Activated naive CD4-positive, alpha-beta T cell treated with anti-CD3 and anti-CD28 coated beads, Interleukin-2, amount 10 ng/mL, durations not matched to agents 7 days and 5 days (primary cell): ENCODE measurements at regions of chr11 and their contacts with region 1.

Region 1: GRCh38 chr11:48055292-48056132 is 75.2 kb downstream of the PTPRJ start:
- DNase-seq: peak; percentile 89
- H3K4me3 Mint-ChIP-seq: peak overlapping the region; percentile 41
- H3K27ac Mint-ChIP-seq: peak overlapping the region; percentile 86
- H3K4me1 Mint-ChIP-seq: peaks cover 94% of the 10 kb centered on the region
- H3K27me3 Mint-ChIP-seq: no peaks in the 10 kb centered on the region

Region 2: DNA sequence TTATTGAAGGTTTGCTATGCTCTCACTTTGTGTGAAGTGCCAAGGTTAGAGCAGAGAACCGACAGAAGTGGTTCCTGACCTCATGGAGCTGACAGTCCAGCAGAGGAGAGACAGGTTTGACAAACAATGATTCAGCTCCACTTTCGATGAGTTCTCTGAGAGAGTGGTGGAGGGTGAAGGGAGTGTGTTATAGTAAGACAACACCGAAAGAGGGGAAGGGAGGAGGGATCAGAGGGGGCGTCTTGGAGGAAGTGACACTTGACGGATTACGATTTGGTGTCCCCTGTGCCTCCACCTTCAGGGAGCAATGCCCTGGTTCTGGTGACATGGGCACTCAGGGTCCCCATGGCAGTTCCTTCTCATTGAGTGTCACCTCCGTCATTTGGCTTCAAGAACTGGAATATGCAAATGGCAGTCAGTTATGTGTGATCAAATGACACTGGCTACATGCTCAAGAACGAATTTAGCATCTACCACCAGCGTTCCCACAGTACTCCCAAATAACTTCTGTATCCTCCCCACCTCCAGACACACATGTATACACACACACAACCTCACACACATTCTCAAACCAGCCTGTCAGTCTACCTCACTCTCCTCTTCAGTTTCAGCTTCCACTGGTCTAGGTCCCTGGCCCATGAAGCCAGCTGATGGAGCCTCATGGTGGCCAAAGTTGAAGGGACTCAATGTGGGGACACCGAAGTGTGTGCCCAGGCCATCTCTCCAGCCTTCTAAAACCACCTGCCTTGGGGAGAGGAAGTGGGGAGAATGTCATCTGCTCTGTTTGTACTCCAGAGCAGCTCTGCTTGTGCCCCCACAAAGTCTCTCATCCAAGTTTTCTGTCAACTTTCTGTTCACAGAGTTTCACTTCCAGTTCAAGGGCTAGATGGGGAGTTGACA is 176.0 kb before region 1 on chr11:
- CTCF ChIA-PET with region 1: no interaction called
- DNase-seq: no peak
- H3K4me3 Mint-ChIP-seq: no peak overlapping the region
- H3K27ac Mint-ChIP-seq: peak overlapping the region; percentile 19
- H3K4me1 Mint-ChIP-seq: peaks cover 33% of the 10 kb centered on the region
- H3K27me3 Mint-ChIP-seq: peaks cover 7% of the 10 kb centered on the region

Region 3: GRCh38 chr11:48001438-48002021 is 54.0 kb before region 1 on chr11:
- CTCF ChIA-PET with region 1: interaction called, 23 read pairs
- DNase-seq: peak; percentile 93
- H3K4me3 Mint-ChIP-seq: peak overlapping the region; percentile 53
- H3K27ac Mint-ChIP-seq: peak overlapping the region; percentile 96
- H3K4me1 Mint-ChIP-seq: peaks cover 92% of the 10 kb centered on the region
- H3K27me3 Mint-ChIP-seq: no peaks in the 10 kb centered on the region

Region 4: GRCh38 chr11:48028914-48029680 is 26.4 kb before region 1 on chr11:
- CTCF ChIA-PET with region 1: no interaction called
- DNase-seq: peak; percentile 60
- H3K4me3 Mint-ChIP-seq: peak overlapping the region; percentile 8
- H3K27ac Mint-ChIP-seq: peak overlapping the region; percentile 90
- H3K4me1 Mint-ChIP-seq: peaks cover 71% of the 10 kb centered on the region
- H3K27me3 Mint-ChIP-seq: no peaks in the 10 kb centered on the region

Region 5: GRCh38 chr11:48043111-48043990 is 12.2 kb before region 1 on chr11:
- CTCF ChIA-PET with region 1: interaction called, 13 read pairs
- DNase-seq: peak; percentile 59
- H3K4me3 Mint-ChIP-seq: peak overlapping the region; percentile 35
- H3K27ac Mint-ChIP-seq: peak overlapping the region; percentile 84
- H3K4me1 Mint-ChIP-seq: peaks cover 67% of the 10 kb centered on the region
- H3K27me3 Mint-ChIP-seq: no peaks in the 10 kb centered on the region

Region 6: DNA sequence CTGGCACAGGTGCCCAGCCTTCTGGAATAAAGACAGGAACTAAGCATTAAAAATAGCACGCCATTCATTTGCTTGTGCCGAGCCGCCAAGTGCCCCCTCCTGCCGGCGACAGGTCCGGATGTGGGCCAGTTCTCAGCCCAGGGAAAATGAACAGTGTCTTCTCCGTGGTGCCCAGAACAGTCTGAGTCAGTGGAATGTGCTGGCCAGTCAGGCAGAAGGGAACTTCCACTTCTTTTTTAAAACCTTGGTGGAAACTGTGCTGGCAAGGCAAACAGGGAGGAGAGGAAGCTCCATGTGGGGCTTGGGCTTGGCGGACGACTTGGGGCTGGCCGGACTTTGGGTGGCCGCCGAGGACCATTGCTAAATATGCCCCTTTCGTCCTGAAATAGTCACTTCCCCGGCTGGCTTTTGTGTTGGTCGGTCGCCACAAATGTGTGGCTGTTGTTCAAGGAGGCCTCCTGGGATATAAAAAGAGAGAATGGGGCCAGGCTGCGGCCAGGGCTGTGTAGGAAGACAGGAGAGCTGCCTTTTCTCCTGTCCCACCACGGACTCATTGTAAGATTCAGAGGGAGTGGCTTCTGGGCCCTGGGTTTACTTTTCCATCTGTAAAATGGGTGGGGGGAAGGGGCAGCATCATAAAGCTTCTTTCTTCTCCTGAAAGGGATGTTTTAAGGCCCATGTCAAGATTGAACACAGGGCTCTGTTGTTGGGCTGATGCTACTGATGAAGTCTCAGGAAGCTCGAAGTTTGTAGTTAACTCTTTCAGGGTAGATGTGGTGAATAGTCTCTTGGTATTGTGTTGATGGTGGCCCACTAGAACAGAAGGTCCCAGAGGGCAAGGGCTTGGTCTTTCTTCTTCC is 25.9 kb after region 1 on chr11:
- CTCF ChIA-PET with region 1: no interaction called
- DNase-seq: peak; percentile 56
- H3K4me3 Mint-ChIP-seq: no peak overlapping the region
- H3K27ac Mint-ChIP-seq: peak overlapping the region; percentile 19
- H3K4me1 Mint-ChIP-seq: peaks cover 54% of the 10 kb centered on the region
- H3K27me3 Mint-ChIP-seq: no peaks in the 10 kb centered on the region

Region 7: DNA sequence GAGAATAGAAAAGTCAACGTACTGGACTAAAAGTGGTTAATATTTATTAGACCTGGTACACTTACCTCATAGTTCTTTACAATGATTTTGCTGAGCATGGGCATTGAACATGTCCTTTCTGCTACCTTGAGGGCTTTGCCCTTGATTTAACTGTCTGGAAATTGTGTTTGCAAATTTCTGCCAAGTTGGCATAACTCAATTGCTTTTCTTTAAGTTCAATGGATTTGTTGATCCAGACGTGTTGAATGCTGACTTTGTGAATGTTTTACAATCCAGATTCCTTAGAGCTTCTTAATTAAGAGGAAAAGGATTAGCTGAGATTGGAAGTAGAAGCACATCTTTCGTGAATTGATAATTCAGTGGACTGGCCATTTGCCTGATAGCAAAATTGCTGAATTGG is 182.2 kb after region 1 on chr11:
- CTCF ChIA-PET with region 1: no interaction called
- DNase-seq: no peak
- H3K4me3 Mint-ChIP-seq: no peak overlapping the region
- H3K27ac Mint-ChIP-seq: no peak overlapping the region
- H3K4me1 Mint-ChIP-seq: no peaks in the 10 kb centered on the region
- H3K27me3 Mint-ChIP-seq: peaks cover 8% of the 10 kb centered on the region